CD4-positive, alpha-beta memory T cell (primary cell): ENCODE measurements at regions of chr22 and their contacts with region 1.

Region 1: GRCh38 chr22:41411021-41411851 is 29.5 kb downstream of the TEF start:
- DNase-seq: no peak
- H3K4me3 ChIP-seq: no peak overlapping the region
- H3K4me3 Mint-ChIP-seq: peak overlapping the region in 2 of 8 donors; percentile 39 to 54
- H3K27ac ChIP-seq: no peak overlapping the region
- H3K27ac Mint-ChIP-seq: peak overlapping the region; percentile 67 to 99 (median 98)
- H3K4me1 ChIP-seq: peaks cover 26% of the 10 kb centered on the region
- H3K4me1 Mint-ChIP-seq: peaks cover 13 to 40% (median 26%) of the 10 kb centered on the region in 4 donors
- H3K27me3 ChIP-seq: no peaks in the 10 kb centered on the region
- H3K27me3 Mint-ChIP-seq: no peaks in the 10 kb centered on the region

Region 2: GRCh38 chr22:41264408-41264941 is 146.8 kb before region 1 on chr22:
- CTCF ChIA-PET with region 1: no interaction called
- POLR2A ChIA-PET with region 1: no interaction called
- intact Hi-C with region 1: no loop called
- DNase-seq: no peak
- H3K4me3 ChIP-seq: no peak overlapping the region
- H3K4me3 Mint-ChIP-seq: no peak overlapping the region
- H3K27ac ChIP-seq: no peak overlapping the region
- H3K27ac Mint-ChIP-seq: peak overlapping the region in 2 of 7 donors; percentile 27 to 75
- H3K4me1 ChIP-seq: no peaks in the 10 kb centered on the region
- H3K4me1 Mint-ChIP-seq: peaks cover 0 to 3% (median under 1%) of the 10 kb centered on the region in 4 donors
- H3K27me3 ChIP-seq: no peaks in the 10 kb centered on the region
- H3K27me3 Mint-ChIP-seq: no peaks in the 10 kb centered on the region

Region 3: GRCh38 chr22:41517172-41518047 is 106.2 kb after region 1 on chr22:
- CTCF ChIA-PET with region 1: interaction called, 136 read pairs
- POLR2A ChIA-PET with region 1: interaction called, 3 read pairs
- intact Hi-C with region 1: no loop called
- DNase-seq: peak in 3 of 5 donors; percentile 18 to 36 (median 22)
- H3K4me3 ChIP-seq: no peak overlapping the region
- H3K4me3 Mint-ChIP-seq: no peak overlapping the region
- H3K27ac ChIP-seq: no peak overlapping the region
- H3K27ac Mint-ChIP-seq: peak overlapping the region in 1 of 7 donors; percentile 29
- H3K4me1 ChIP-seq: no peaks in the 10 kb centered on the region
- H3K4me1 Mint-ChIP-seq: peaks cover 0 to 1% (median 0%) of the 10 kb centered on the region in 4 donors
- H3K27me3 ChIP-seq: no peaks in the 10 kb centered on the region
- H3K27me3 Mint-ChIP-seq: no peaks in the 10 kb centered on the region

Region 4: GRCh38 chr22:41526837-41527799 is 115.9 kb after region 1 on chr22:
- CTCF ChIA-PET with region 1: interaction called, 124 read pairs
- POLR2A ChIA-PET with region 1: no interaction called
- intact Hi-C with region 1: no loop called
- DNase-seq: peak; percentile 61 to 71 (median 62)
- H3K4me3 ChIP-seq: no peak overlapping the region
- H3K4me3 Mint-ChIP-seq: no peak overlapping the region
- H3K27ac ChIP-seq: peak overlapping the region; percentile 12
- H3K27ac Mint-ChIP-seq: peak overlapping the region; percentile 43 to 85 (median 72)
- H3K4me1 ChIP-seq: peaks cover 15% of the 10 kb centered on the region
- H3K4me1 Mint-ChIP-seq: peaks cover 4 to 25% (median 12%) of the 10 kb centered on the region in 4 donors
- H3K27me3 ChIP-seq: no peaks in the 10 kb centered on the region
- H3K27me3 Mint-ChIP-seq: no peaks in the 10 kb centered on the region